MCF 10A (cell line): ENCODE measurements at regions of chr17 and their contacts with region 1.

Region 1: GRCh38 chr17:10327640-10328039 is 45.2 kb downstream of the MYH13 start:
- DNase-seq: peak; percentile 75
- H3K4me3 Mint-ChIP-seq: no peak overlapping the region
- H3K27ac Mint-ChIP-seq: no peak overlapping the region
- H3K4me1 Mint-ChIP-seq: no peaks in the 10 kb centered on the region
- H3K27me3 Mint-ChIP-seq: peaks cover 20% of the 10 kb centered on the region
- CTCF ChIP-seq: peak; percentile 94

Region 2: GRCh38 chr17:9924735-9925191 is 402.9 kb before region 1 on chr17:
- CTCF ChIA-PET with region 1: interaction called, 3 read pairs
- POLR2A ChIA-PET with region 1: no interaction called
- intact Hi-C with region 1: loop called (anchors 10 kb)
- DNase-seq: peak; percentile 89
- H3K4me3 Mint-ChIP-seq: no peak overlapping the region
- H3K27ac Mint-ChIP-seq: peak overlapping the region; percentile 22
- H3K4me1 Mint-ChIP-seq: peaks cover 6% of the 10 kb centered on the region
- H3K27me3 Mint-ChIP-seq: no peaks in the 10 kb centered on the region
- CTCF ChIP-seq: peak; percentile 80

Region 3: DNA sequence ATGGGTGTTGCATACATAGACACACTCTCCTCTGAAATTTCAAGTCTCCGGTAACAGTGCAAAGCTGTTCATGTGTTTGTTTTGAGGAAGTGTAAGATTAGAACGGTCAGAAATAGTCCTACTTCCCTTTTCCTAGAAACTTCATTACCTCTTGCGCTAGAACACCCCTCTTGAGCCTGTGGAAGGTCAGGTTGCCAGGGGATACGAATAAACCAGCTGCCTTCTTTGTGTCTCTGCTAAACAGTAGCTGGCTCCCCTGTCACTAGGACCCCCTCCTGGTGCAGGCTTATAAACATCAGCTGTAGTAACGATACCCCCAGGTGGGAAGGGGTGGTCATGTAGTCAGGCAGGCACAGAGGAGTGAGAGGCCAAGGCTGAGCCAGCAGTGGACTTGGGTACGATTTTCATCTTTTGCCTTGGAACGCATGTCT is 309.2 kb before region 1 on chr17:
- CTCF ChIA-PET with region 1: no interaction called
- POLR2A ChIA-PET with region 1: no interaction called
- intact Hi-C with region 1: no loop called
- DNase-seq: no peak
- H3K4me3 Mint-ChIP-seq: no peak overlapping the region
- H3K27ac Mint-ChIP-seq: no peak overlapping the region
- H3K4me1 Mint-ChIP-seq: no peaks in the 10 kb centered on the region
- H3K27me3 Mint-ChIP-seq: no peaks in the 10 kb centered on the region
- CTCF ChIP-seq: no peak

Region 4: DNA sequence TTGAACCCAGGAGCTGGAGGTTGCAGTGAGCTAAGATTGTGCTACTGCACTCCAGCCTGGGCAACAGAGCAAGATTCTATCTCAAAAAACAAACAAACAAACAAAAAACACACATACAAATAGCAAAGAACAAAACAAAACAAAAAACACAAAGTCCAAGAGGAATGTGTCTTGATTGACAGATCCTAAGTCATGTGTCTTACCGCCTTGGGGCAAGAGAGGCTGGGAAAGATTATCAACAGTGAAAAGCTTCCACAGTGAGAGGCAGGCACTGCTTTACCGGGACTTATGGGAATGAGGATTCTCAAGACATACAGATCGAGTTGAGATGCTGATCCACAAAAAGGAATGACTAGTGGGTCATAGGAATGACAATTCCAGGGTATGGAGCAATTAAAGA is 66.5 kb before region 1 on chr17:
- CTCF ChIA-PET with region 1: no interaction called
- POLR2A ChIA-PET with region 1: no interaction called
- intact Hi-C with region 1: no loop called
- DNase-seq: no peak
- H3K4me3 Mint-ChIP-seq: no peak overlapping the region
- H3K27ac Mint-ChIP-seq: no peak overlapping the region
- H3K4me1 Mint-ChIP-seq: no peaks in the 10 kb centered on the region
- H3K27me3 Mint-ChIP-seq: peaks cover 10% of the 10 kb centered on the region
- CTCF ChIP-seq: no peak

Region 5: DNA sequence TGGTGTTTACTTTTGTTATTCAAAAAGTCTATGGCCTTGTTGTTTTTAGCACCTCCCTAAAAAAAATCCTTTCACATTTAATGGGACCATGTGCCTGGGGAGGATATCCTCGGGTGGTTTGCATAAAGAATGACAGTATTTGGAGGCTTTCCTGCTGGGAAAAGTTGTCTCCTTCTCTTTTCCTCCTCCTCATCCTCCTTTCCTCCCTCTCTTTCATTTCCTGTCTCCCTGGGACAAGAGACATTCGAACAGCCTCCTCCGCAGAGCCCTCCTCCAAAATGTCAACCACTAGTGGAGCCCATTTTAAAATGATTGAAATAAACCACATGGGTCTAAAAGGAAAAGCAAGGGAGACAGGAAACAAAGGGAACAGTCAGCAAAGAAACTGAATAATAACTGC is 22.2 kb before region 1 on chr17:
- CTCF ChIA-PET with region 1: interaction called, 11 read pairs
- POLR2A ChIA-PET with region 1: interaction called, 3 read pairs
- intact Hi-C with region 1: no loop called
- DNase-seq: no peak
- H3K4me3 Mint-ChIP-seq: no peak overlapping the region
- H3K27ac Mint-ChIP-seq: no peak overlapping the region
- H3K4me1 Mint-ChIP-seq: no peaks in the 10 kb centered on the region
- H3K27me3 Mint-ChIP-seq: no peaks in the 10 kb centered on the region
- CTCF ChIP-seq: no peak

Region 6: DNA sequence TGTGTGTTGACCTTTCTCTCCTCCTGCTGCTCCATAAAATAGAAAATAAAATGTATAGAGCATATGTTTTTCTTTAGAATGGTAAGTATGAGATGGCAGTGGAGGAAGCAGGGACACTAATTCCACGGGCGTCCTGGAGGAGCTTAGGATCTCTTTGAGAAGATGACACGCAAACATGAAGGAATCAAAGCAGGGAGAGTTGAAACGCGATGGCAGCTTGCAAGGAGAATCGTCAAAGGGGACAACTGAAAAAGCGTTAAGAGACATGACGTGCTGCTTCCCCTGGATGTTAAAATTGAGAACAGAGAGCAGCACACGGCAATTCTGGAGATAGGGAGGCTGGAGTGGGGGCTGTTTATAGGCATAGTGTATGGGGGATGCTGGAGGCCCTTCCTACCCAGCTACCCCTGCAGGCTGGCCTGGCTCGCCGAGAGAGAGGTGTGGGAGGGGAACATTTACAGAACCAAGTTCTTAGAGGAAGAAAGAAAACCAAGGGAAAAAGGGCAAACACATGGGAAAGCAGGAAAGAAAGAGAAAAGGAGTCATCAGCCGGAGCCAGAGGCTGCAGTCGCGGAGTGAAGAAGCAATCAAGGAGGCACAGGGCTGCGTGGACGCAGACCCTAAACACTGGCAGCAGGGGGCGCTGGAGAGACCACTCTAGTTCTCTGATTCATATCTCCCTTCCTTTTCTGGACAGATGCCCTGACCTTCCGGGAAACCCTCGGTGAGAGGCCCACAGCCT is 10.7 kb before region 1 on chr17:
- CTCF ChIA-PET with region 1: interaction called, 18 read pairs
- POLR2A ChIA-PET with region 1: no interaction called
- intact Hi-C with region 1: no loop called
- DNase-seq: peak; percentile 65
- H3K4me3 Mint-ChIP-seq: no peak overlapping the region
- H3K27ac Mint-ChIP-seq: no peak overlapping the region
- H3K4me1 Mint-ChIP-seq: peaks cover 10% of the 10 kb centered on the region
- H3K27me3 Mint-ChIP-seq: peaks cover 25% of the 10 kb centered on the region
- CTCF ChIP-seq: peak; percentile 73

Region 7: GRCh38 chr17:10398352-10398751 is 70.7 kb after region 1 on chr17:
- CTCF ChIA-PET with region 1: no interaction called
- POLR2A ChIA-PET with region 1: no interaction called
- intact Hi-C with region 1: no loop called
- DNase-seq: no peak
- H3K4me3 Mint-ChIP-seq: no peak overlapping the region
- H3K27ac Mint-ChIP-seq: no peak overlapping the region
- H3K4me1 Mint-ChIP-seq: no peaks in the 10 kb centered on the region
- H3K27me3 Mint-ChIP-seq: peaks cover 55% of the 10 kb centered on the region
- CTCF ChIP-seq: no peak